Activated CD4-positive, alpha-beta T cell treated with anti-CD3 and anti-CD28 coated beads for 36 hours (primary cell): ENCODE measurements at regions of chr3 and their contacts with region 1.

Region 1: GRCh38 chr3:189530822-189531221 is 100.4 kb upstream of the TP63 start:
- DNase-seq: peak; percentile 30
- ATAC-seq: no peak
- H3K4me3 Mint-ChIP-seq: peak overlapping the region; percentile 38
- H3K27ac Mint-ChIP-seq: peak overlapping the region; percentile 82
- H3K4me1 Mint-ChIP-seq: peaks cover 35% of the 10 kb centered on the region
- H3K27me3 Mint-ChIP-seq: no peaks in the 10 kb centered on the region

Region 2: GRCh38 chr3:189270248-189270832 is 260.5 kb before region 1 on chr3:
- CTCF ChIA-PET with region 1: interaction called, 3 read pairs
- POLR2A ChIA-PET with region 1: interaction called, 5 read pairs
- intact Hi-C with region 1: loop called in 1 of 2 experiments (anchors 10 kb)
- DNase-seq: peak; percentile 67
- ATAC-seq: peak; percentile 80
- H3K4me3 Mint-ChIP-seq: no peak overlapping the region
- H3K27ac Mint-ChIP-seq: no peak overlapping the region
- H3K4me1 Mint-ChIP-seq: peaks cover 18% of the 10 kb centered on the region
- H3K27me3 Mint-ChIP-seq: no peaks in the 10 kb centered on the region

Region 3: GRCh38 chr3:189324538-189325138 is 206.2 kb before region 1 on chr3:
- CTCF ChIA-PET with region 1: interaction called, 3 read pairs
- POLR2A ChIA-PET with region 1: no interaction called
- intact Hi-C with region 1: loop called (anchors 1 to 5 kb)
- DNase-seq: peak; percentile 91
- ATAC-seq: peak; percentile 96
- H3K4me3 Mint-ChIP-seq: peak overlapping the region; percentile 49
- H3K27ac Mint-ChIP-seq: peak overlapping the region; percentile 96
- H3K4me1 Mint-ChIP-seq: peaks cover 67% of the 10 kb centered on the region
- H3K27me3 Mint-ChIP-seq: no peaks in the 10 kb centered on the region

Region 4: DNA sequence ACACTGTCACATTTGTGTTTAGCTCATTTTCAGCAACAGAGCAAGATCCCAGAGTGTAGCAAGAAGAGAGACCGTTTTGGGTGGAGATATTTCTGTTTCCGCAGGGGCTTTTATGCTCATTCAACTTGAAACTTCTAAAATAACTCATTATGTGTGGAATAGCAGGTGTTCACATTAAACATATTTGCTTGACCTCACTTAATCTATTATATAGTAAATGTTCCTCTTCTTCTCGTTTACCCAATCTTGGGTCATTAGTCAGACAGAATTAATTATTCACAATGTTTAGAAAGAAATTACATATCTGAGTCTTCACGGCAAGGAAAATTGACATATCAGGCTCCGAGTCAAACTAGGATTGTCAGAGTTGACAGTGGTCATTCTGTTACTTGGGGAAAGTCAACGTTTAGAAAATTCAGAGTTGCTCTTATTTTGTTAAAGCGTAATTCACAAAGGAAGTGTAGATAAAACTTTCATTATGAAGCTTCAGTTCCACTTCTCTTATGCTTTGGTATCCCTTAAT is 136.2 kb before region 1 on chr3:
- CTCF ChIA-PET with region 1: no interaction called
- POLR2A ChIA-PET with region 1: no interaction called
- intact Hi-C with region 1: loop called in 1 of 2 experiments (anchors 1 kb)
- DNase-seq: no peak
- ATAC-seq: peak; percentile 70
- H3K4me3 Mint-ChIP-seq: no peak overlapping the region
- H3K27ac Mint-ChIP-seq: no peak overlapping the region
- H3K4me1 Mint-ChIP-seq: peaks cover 17% of the 10 kb centered on the region
- H3K27me3 Mint-ChIP-seq: no peaks in the 10 kb centered on the region

Region 5: GRCh38 chr3:189570916-189571315 is 40.1 kb after region 1 on chr3:
- CTCF ChIA-PET with region 1: no interaction called
- POLR2A ChIA-PET with region 1: interaction called, 4 read pairs
- intact Hi-C with region 1: loop called in 1 of 2 experiments (anchors 1 kb)
- DNase-seq: no peak
- ATAC-seq: peak; percentile 64
- H3K4me3 Mint-ChIP-seq: no peak overlapping the region
- H3K27ac Mint-ChIP-seq: no peak overlapping the region
- H3K4me1 Mint-ChIP-seq: peaks cover 35% of the 10 kb centered on the region
- H3K27me3 Mint-ChIP-seq: peaks cover 1% of the 10 kb centered on the region

Region 6: DNA sequence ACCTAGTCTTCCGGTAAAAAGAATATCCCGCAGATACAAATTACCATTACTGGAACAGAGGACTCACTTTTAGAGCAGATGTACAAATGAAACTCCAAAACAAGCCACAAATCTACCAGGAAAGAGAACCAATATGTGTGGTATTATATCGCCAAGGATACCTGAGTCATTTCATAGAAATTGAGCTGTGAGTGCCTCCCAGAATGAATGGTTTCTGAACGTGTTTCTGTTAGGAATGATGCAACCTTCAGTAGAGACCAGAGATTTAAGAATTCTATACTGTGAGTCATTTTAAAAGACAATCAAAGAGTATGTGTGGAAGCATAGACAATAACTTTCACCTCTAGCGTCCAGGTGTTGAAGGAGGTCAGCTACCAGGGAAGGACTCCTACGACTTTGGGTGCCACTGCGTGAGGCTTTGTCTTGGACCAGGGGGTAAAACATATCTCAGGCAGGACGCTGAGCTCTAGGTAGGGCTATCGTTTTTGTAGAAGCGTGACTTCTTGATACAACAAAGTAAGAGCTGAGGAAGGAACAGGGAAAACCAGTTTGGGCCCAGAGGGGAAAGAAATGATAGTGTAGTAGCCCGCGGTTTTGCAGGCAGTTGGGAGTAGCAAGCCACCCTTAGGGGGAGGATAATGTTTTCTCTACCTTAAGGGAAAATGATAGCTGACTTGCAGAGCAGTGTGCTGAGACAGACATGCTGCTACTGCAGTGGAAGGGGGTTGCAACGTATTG is 310.8 kb after region 1 on chr3:
- CTCF ChIA-PET with region 1: no interaction called
- POLR2A ChIA-PET with region 1: no interaction called
- intact Hi-C with region 1: loop called (anchors 1 kb)
- DNase-seq: peak; percentile 13
- ATAC-seq: peak; percentile 89
- H3K4me3 Mint-ChIP-seq: no peak overlapping the region
- H3K27ac Mint-ChIP-seq: peak overlapping the region; percentile 82
- H3K4me1 Mint-ChIP-seq: peaks cover 27% of the 10 kb centered on the region
- H3K27me3 Mint-ChIP-seq: peaks cover 9% of the 10 kb centered on the region